ENCODE measurements at regions of chr2 and their contacts with region 1.

Region 1: DNA sequence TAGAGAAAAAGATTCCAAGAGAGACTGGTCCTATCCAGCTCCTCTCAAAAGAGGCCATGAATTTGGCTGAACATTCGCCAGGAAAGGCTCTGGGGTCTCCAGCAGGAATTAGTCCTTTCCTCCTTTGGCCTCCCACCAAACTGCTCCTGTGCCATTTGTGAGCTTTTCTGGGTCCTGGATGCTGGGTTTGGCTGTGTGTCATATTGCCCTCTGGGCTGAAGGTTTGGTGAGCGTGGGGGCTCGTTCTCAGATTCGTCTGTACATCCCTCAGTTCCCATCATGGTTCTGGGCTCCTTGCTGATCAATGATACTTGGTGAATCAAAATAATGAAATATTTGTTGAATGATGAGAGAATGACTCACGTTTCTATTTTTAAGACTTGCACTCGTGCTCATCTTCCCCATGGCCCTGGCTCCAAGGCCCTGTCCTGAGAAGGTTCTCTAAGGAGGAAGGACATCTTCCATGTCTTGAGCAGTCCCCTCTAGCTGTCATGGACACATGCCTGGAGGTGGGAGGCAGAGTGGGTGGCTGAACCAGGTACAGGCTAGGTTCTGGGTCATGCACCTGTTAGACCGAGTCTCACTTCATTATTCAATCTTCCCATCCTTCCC is 47.8 kb upstream of the RHOB start:
- DNase-seq: no peak
- ATAC-seq: no peak

Region 2: GRCh38 chr2:20365249-20365817 is 33.7 kb before region 1 on chr2:
- intact Hi-C with region 1: no loop called
- DNase-seq: no peak
- ATAC-seq: no peak

Region 3: GRCh38 chr2:20635675-20636584 is 236.9 kb after region 1 on chr2:
- intact Hi-C with region 1: loop called in 1 of 2 experiments (anchors 5 kb)
- DNase-seq: peak; percentile 76 to 87
- ATAC-seq: peak; percentile 62

Measured in left colon (tissue), 2 donors.